ENCODE measurements at regions of chr20 and their contacts with region 1.

Region 1: DNA sequence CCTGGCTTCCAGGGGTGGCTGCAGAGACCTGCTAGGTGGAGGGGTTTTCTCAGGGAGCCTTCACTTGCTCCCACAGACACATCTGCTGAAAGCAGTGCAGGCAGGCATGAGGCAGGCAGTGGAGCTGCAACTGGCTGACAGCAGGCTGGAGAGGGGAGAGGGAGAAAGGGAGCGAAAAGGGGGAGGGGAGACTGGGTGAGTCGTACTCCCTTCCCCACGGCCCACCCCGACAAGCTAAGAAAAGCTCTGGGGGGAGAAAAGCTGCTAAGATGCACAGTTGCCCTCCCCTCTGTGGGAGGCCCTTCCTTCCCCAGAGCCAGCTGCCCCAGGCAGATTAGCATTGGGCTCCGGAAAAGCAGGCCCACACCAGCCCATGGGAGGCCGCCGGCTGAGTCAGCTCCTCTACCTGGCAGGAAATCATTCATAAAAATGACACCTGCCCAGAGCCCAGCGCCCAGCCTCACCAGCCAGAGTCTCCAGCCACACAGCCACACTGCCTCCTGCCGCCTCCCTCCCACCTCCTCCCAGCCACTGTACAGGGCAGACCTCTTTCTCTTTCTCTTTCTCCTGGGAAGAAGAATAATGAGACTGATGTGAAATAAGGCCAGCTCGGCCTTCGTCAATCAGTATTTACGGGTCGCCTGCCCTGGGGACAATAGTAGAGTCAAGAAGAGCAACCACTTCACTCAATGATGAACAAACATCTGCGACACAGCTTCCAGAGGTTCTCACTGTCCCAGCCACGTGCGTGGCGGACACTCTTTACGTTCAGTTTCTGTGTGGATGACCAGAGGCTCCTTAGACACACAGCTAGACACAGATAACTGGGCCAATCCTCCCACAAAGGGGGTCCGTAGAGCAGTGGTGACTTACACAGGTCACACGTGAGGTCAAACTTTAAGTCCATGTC is 7.7 kb upstream of the C20orf203 start:
- DNase-seq: no peak
- H3K4me3 ChIP-seq: no peak overlapping the region
- H3K4me1 ChIP-seq: no peaks in the 10 kb centered on the region
- H3K27me3 ChIP-seq: no peaks in the 10 kb centered on the region

Region 2: DNA sequence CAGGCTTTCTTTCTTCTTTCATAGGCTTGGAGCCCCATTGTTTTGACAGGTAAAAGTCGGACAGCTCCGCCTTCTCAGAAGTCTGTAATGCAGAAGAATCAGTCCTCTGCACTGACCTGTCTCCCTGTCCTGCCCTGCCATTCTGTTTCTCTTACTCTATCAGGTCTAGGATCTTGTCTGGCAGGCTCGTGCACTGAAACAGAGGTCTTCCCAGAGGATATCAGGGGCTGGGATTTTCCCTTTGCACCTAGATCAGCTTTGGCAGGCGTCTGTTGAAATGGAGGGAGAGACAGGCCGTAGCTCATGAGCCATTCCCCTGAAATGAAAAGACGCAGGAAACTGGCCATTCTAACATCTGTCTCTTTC is 378.9 kb before region 1 on chr20:
- in situ Hi-C with region 1: no loop called
- DNase-seq: peak in 1 of 2 experiments; percentile 32
- H3K4me3 ChIP-seq: no peak overlapping the region
- H3K4me1 ChIP-seq: peaks cover 38% of the 10 kb centered on the region
- H3K27me3 ChIP-seq: no peaks in the 10 kb centered on the region

Region 3: DNA sequence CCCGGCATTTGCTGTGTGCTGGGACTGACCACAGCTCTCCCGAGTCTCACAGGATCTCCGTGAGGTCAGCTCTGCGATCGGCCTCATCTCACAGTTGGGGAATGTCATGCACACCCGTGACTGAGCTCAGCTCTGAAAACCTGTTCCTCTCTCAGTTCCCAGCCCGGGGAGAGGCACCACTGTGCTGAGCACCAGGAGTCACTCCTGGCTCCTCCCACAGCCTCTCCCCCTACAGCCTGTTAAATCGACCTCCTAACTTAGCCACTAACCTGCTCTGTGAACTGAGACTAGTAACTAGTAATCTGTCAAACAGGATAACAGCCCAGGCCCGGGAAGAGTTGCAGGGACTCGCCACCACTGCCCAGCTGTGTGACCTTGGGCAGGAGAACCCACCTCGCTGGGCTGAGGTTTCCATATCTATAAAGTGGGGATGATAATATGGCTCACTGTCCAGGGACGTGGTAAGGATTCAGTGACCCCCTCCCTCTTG is 76.2 kb before region 1 on chr20:
- in situ Hi-C with region 1: no loop called
- DNase-seq: no peak
- H3K4me3 ChIP-seq: no peak overlapping the region
- H3K4me1 ChIP-seq: no peaks in the 10 kb centered on the region
- H3K27me3 ChIP-seq: peaks cover 8% of the 10 kb centered on the region; the same call in 1 of the 2 replicates

Region 4: DNA sequence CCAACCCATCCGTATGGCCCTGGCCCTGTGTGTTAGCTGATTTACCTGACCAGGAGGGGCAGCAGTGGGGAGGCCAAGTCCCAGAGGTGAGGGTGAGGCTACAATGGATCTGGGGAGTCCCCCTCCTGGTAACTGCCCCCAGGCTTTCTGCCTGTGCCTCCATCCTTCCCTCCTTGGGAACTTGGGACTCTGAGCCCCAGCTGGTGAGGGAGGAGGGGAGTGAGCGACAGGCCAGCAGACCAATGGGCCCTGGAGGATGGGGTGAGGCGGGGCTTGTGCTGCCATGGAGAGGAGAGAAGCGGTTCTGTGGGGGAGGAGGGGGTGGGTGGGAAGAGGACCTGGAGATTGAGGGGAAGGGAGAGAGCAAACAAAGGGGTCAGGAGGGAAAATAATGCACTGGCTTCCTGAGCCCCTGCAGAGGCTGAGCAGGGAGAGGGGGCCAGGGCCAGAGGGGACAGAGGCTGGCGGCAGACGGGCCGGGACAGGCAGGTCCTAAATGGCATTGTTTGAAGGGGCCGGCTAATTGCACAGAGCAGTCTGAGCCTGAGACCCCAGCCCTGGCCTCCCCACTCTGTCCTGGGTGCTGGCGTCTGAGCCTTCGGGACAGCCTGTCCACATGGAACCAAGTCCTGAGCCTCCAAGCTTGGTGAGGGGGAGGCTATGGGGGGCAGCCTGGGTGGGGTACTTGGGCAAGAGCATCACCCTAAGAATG is 98.2 kb after region 1 on chr20:
- in situ Hi-C with region 1: loop called (anchors 5 kb)
- DNase-seq: peak in 1 of 2 experiments; percentile 33
- H3K4me3 ChIP-seq: no peak overlapping the region
- H3K4me1 ChIP-seq: no peaks in the 10 kb centered on the region
- H3K27me3 ChIP-seq: no peaks in the 10 kb centered on the region

Region 5: DNA sequence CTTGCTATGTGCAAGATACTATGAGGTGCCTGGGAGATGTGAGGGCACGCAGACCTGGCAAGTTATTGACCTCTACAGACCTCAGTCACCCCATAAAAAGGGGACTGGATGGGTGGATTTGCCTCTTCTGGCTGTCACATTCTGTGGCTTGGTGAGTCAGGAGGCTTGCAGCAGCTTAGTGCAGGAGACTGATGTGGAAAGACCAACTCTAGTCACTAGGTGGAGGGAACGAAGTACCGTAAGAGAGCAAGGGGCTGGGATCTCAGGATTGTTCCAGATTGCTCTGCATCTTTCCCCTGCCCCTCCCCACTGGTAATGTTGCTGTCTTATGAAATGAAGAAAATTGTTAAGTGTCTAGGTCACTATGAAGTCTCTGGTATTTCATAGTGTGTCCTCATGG is 141.6 kb after region 1 on chr20:
- in situ Hi-C with region 1: no loop called
- DNase-seq: no peak
- H3K4me3 ChIP-seq: no peak overlapping the region
- H3K4me1 ChIP-seq: peaks cover 17% of the 10 kb centered on the region
- H3K27me3 ChIP-seq: no peaks in the 10 kb centered on the region